ENCODE measurements at regions of chr12 and their contacts with region 1.

Region 1: GRCh38 chr12:104358347-104359003 is 54.9 kb downstream of the EID3 start:
- DNase-seq: peak; percentile 92
- ATAC-seq: peak; percentile 48
- H3K4me3 ChIP-seq: no peak overlapping the region
- H3K27ac ChIP-seq: peak overlapping the region; percentile 12
- H3K4me1 ChIP-seq: peaks cover 10% of the 10 kb centered on the region
- H3K27me3 ChIP-seq: no peaks in the 10 kb centered on the region
- CTCF ChIP-seq: peak; percentile 88

Region 2: GRCh38 chr12:104201238-104202001 is 157.1 kb before region 1 on chr12:
- CTCF ChIA-PET with region 1: no interaction called
- POLR2A ChIA-PET with region 1: no interaction called
- intact Hi-C with region 1: loop called (anchors 1 kb)
- DNase-seq: peak; percentile 84
- ATAC-seq: peak; percentile 93
- H3K4me3 ChIP-seq: no peak overlapping the region
- H3K27ac ChIP-seq: 0 out of 2 replicates have a peak overlapping the region, but pooled peaks have one; percentile 0
- H3K4me1 ChIP-seq: peaks cover 6% of the 10 kb centered on the region; the same call in 1 of the 2 replicates
- H3K27me3 ChIP-seq: no peaks in the 10 kb centered on the region
- CTCF ChIP-seq: peak; percentile 98

Region 3: GRCh38 chr12:104230304-104231095 is 128.0 kb before region 1 on chr12:
- CTCF ChIA-PET with region 1: no interaction called
- POLR2A ChIA-PET with region 1: no interaction called
- intact Hi-C with region 1: no loop called
- DNase-seq: no peak
- ATAC-seq: no peak
- H3K4me3 ChIP-seq: no peak overlapping the region
- H3K27ac ChIP-seq: no peak overlapping the region
- H3K4me1 ChIP-seq: peaks cover 11% of the 10 kb centered on the region
- H3K27me3 ChIP-seq: no peaks in the 10 kb centered on the region
- CTCF ChIP-seq: no peak

Region 4: DNA sequence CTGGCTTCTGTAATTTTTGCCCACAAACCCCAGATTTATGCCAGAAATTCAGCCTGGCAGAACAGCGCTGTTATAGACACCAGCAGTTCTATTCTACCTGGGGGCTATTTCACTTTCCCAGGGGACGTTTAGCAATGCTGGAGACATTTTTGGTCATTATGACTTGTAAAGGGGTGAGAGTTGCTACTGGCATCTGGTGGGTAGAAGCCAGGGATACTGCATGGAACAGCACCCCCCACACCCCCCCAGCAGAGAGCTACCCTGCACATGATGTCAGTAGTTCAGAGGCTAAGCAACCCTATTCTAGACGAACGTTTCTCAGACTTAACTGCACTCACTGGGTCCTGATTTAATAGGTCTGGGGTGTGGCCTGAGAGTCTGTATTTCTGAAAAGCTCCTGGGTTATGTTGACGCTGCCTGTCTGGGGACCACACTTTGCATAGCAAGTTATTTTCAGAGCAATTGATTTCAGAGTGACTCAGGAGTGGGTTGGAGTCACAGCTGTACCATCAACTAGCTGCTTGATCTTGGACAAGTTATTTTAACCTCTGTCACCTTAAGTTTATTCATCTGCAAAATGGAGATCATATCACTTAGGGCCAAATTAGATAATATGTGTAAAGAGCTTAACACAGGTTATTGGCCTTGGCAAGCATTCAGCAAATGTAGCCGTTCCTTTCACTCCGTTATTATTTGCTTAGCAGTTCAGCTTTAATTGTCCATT is 146.8 kb after region 1 on chr12:
- CTCF ChIA-PET with region 1: no interaction called
- POLR2A ChIA-PET with region 1: no interaction called
- intact Hi-C with region 1: no loop called
- DNase-seq: no peak
- ATAC-seq: peak; percentile 49
- H3K4me3 ChIP-seq: no peak overlapping the region
- H3K27ac ChIP-seq: no peak overlapping the region
- H3K4me1 ChIP-seq: no peaks in the 10 kb centered on the region
- H3K27me3 ChIP-seq: no peaks in the 10 kb centered on the region
- CTCF ChIP-seq: no peak

Measured in PC-3 (cell line).